ENCODE measurements at regions of chr17 and their contacts with region 1.

Region 1: DNA sequence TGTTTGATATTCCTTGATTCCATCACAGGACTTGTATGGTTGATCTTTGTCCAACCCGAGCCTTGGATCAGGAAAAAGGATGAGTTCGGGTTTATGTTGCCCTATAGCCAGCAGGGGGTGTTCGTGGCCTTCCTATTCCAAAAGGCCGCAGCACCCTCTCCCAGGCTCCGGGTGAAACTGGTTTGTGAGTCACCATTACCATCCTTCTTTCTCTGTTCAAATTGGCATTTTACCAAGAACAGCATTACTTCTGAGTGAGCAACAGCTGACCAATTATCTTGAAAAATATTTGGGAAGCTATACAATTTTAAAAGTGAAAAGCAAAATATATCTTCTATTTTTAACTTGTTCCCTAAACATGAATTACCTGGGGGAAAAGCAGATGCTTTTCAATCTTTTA is 24.3 kb upstream of the KRT20 start:
- DNase-seq: peak; percentile 85
- H3K4me3 ChIP-seq: no peak overlapping the region
- H3K27ac ChIP-seq: no peak overlapping the region
- H3K4me1 ChIP-seq: peaks cover 0 to 31% (median 9%) of the 10 kb centered on the region in 6 donors
- H3K27me3 ChIP-seq: peaks cover 0 to 40% (median 10%) of the 10 kb centered on the region in 7 donors
- CTCF ChIP-seq: peak; percentile 62 to 80 (median 74)
- POLR2A ChIP-seq: no peak

Region 2: DNA sequence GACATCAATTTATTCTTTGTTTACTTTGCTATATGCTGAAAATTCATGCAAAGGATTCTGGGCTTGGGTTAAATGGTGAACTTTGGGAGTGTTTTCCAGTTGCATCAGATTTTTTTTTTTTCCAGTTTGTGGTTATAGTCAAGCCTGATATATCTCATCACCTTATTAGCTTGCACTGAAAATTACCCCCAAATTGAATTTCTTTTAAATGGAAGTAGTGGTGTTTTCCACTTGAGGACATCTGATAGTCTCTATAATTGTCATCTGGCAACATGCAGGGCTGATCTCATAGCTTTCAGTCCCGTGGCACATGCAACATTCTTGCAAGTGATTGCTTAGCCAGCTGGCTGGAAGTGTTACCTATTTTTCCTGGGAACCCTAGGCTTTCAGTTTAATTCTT is 104.3 kb after region 1 on chr17:
- intact Hi-C with region 1: no loop called
- DNase-seq: no peak
- H3K4me3 ChIP-seq: no peak overlapping the region
- H3K27ac ChIP-seq: no peak overlapping the region
- H3K4me1 ChIP-seq: no peaks in the 10 kb centered on the region
- H3K27me3 ChIP-seq: no peaks in the 10 kb centered on the region
- CTCF ChIP-seq: no peak
- POLR2A ChIP-seq: no peak

Region 3: DNA sequence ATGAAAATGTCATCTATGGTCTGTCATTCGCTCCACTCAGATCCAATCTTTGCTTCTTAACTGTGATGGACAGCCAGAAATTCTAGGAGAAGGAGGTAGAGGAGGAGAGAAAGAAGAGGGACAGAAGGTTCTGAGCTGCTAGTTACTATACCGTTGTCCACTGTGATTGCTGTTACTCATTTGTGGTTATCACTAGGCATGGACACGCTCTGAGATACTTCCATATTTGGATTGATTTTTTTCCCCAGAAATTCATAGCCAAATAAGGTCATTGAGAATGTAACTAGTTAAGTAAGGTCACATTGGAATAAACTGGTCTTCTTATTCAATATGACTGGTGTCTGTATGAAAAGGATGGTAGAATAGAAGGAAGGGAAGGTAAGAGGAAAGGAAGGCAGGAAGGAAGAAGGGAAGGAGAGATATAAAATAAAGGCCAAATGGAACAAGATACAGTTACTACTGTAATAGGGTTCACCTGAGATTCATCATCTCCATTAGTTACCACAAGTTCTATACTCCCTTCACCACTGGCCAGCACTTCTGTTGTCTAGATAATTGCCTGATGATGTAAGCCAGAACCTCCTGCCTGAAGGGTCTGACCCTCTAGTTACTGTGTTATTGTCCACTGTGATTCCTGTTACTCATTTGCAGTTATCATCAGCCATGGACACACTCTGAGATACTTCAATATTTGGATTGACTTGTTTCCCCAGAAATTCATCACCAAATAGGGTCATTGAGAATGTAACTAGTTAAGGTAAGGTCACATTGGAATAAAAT is 369.0 kb after region 1 on chr17:
- intact Hi-C with region 1: no loop called
- DNase-seq: no peak
- H3K4me3 ChIP-seq: no peak overlapping the region
- H3K27ac ChIP-seq: no peak overlapping the region
- H3K4me1 ChIP-seq: no peaks in the 10 kb centered on the region
- H3K27me3 ChIP-seq: peaks cover 0 to 4% (median 0%) of the 10 kb centered on the region in 7 donors
- CTCF ChIP-seq: no peak
- POLR2A ChIP-seq: no peak

Region 4: DNA sequence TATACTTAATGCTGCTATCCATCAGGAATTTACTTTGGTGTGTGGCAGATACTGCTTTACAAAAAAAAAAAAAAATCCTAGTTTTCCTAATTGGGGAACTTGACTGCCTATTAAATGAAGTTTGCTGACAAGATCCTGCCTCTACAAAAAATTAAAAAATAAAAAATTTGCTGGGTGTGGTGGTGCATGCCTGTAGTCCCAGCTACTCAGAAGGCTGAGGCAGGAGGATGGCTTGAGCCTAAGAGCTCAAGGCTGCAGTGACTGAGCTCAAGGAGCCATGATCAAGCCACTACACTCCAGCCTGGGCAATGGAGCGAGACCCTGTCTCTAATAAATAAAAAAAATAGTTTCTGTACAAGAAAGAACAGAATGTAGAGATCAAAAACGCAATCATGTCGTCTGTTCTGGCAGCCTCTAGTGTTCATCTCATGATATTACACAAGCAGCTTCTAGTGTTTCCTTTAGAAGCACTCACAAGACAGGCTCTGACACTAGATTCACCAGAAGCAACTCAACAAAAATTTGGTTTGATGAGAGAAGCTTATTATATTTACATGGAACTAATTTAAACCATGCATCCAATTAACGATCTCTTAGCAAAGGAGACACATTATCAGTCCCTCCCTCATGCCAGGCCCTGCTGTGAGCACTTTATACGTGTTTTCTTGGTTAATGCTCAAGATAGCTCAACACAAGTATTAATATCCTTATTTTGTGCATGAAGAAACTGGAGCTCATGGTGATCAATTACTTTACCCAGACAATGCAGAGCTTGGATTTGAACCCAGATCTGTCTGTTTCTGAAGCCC is 412.9 kb after region 1 on chr17:
- intact Hi-C with region 1: loop called (anchors 2 kb)
- DNase-seq: no peak
- H3K4me3 ChIP-seq: no peak overlapping the region
- H3K27ac ChIP-seq: no peak overlapping the region
- H3K4me1 ChIP-seq: peaks cover 0 to 6% (median 0%) of the 10 kb centered on the region in 6 donors
- H3K27me3 ChIP-seq: no peaks in the 10 kb centered on the region
- CTCF ChIP-seq: peak; percentile 59 to 82 (median 75)
- POLR2A ChIP-seq: no peak

Region 5: DNA sequence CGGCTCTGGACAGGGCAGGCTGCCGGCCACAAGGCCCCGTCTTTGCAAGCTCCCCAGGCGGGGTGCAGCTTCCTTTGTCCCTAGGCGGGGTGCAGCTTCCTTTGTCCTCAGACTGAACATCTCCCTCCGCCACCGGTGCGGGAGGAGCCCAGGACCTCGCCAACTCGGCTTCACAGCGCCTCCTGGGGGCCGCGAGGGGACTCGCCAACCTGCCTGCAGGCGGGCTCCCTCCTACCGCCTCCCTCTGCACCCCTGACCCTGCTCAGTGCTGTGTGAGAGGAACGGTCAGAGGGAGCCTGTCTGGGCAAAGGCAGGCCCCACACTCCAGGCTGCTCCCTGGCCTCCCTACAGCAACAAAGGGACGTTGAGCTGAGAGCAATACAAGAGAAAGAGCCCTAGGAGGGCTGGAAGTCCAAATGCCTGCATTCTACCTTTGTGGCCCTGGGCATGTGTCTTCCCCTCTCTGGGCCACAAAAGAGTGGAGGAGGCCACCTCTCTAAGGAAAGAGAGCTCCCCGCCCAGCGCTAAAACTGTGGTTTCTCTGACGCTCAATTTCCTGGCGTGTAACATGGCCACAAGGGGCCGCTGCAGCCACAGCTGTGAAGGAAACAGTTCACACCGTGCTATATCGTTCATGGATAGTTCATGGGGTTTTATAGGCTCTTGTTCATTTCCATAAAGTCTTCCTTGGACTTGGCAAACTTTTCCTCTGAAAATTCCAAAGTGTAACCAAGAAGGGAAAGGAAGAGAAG is 639.7 kb after region 1 on chr17:
- intact Hi-C with region 1: loop called (anchors 5 kb)
- DNase-seq: peak; percentile 95
- H3K4me3 ChIP-seq: peak overlapping the region in 5 of 8 donors; percentile 13 to 57 (median 21)
- H3K27ac ChIP-seq: peak overlapping the region in 5 of 8 donors; percentile 55 to 75 (median 65)
- H3K4me1 ChIP-seq: peaks cover 12 to 24% (median 22%) of the 10 kb centered on the region in 6 donors
- H3K27me3 ChIP-seq: peaks cover 0 to 20% (median 0%) of the 10 kb centered on the region in 7 donors
- CTCF ChIP-seq: peak; percentile 69 to 94 (median 86)
- POLR2A ChIP-seq: no peak

Region 6: GRCh38 chr17:41648411-41649195 is 739.3 kb after region 1 on chr17:
- intact Hi-C with region 1: loop called (anchors 2 kb)
- DNase-seq: peak; percentile 96
- H3K4me3 ChIP-seq: peak overlapping the region in 7 of 8 donors; percentile 25 to 68 (median 37)
- H3K27ac ChIP-seq: peak overlapping the region in 4 of 8 donors; percentile 46 to 67 (median 49)
- H3K4me1 ChIP-seq: peaks cover 10 to 37% (median 15%) of the 10 kb centered on the region in 6 donors
- H3K27me3 ChIP-seq: no peaks in the 10 kb centered on the region
- CTCF ChIP-seq: peak; percentile 80 to 94 (median 90)
- POLR2A ChIP-seq: no peak